ENCODE measurements at regions of chr22 and their contacts with region 1.

Region 1: DNA sequence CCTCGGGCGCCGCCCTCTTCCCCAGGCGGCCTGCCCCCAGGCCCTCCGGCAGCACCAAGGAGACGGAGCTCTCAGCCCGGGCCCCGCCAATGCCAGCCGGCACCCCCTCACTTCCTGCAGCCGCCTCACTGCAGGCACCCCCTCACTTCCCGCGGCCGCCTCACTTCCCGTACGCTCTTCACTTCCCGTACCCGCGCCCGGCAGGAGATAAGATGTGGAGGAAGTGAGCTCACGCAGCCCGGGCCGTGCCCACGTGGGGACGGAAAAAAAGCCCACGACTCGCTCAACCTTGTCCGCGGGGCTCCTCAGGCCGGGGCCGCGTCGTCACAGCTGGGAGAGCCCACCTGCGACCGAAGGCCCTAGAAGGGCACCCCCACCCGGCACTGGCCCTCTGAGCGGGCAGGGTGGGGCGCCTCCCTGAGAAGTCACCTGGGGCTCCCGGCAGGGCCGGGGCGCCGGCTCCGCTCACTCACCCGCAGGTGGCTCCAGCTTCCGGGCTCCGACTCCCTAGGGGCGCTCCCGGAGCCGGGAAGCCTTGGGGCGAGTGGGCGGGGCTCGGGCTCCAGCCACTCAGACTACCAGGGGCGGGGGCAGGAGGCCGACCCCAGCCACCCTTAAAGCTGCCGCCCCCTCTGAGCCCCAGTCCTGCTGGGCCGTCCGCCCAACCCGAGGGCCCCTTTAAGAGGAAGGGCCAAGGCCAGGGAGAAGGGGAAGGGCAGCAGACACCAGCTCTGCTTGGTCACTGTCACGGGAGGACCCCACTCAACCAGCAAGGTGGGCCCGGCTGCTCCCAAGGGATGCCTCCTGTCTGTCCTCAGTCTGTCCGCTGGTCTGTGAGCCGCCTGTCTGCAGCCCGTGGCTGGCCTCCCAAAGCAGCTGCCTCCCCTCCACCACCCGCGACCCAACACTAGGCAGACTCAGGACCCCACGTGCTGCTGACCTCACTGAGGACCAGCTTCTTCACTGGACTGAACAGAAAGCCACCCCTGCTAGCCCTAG is 31.4 kb downstream of the PISD start:
- DNase-seq: peak; percentile 94
- ATAC-seq: peak; percentile 82 to 89

Region 2: DNA sequence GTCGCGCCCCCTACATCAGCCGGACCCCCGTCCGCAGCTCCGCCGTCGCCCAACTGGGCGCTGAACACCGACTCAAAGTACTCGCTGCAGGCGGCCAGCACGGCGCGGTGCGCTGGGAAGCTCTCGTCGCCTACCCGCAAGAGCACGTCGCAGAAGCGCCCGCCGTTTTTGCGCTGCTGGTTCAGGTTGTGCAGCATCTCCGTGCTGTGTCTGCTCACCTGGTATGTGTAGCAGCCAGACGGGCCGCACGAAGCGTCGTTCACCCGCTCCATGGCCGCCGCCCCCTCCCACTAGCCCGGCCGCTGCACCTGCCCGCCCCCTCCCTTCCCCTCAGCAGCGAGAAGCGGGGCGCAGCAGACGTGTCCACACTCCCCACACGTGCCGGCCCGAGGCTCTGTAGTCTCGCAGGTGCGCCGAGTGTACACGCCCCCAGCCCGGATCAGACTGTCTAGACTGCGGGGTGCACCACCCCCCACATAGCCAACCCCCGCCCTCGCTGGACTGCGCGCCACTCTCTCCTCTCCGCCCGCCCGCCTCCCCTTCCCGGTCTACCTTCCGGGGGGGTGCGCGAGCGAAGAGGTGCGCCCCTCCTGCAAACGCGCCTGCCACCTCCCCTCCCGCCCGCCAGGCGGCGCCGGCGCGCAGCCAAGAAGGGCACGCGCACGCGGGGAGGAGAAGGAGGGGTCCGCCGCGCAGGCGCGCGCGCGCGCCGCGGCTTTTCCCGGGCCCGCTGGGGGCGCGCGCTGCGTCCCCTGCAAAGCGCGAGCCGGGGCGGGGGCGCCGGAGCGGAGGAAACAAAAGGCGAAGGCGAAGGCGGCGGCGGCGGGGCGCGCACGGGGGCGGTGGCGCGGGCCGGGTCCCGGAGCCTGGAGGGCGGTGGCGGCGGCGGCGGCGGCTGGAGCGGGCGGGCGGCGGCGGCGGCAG is 285.0 kb before region 1 on chr22:
- intact Hi-C with region 1: loop called in 1 of 2 experiments (anchors 10 kb)
- DNase-seq: peak; percentile 87
- ATAC-seq: peak; percentile 61 to 64

Region 3: GRCh38 chr22:31556627-31557203 is 73.9 kb before region 1 on chr22:
- intact Hi-C with region 1: loop called in 1 of 2 experiments (anchors 2 kb)
- DNase-seq: no peak
- ATAC-seq: no peak

Region 4: DNA sequence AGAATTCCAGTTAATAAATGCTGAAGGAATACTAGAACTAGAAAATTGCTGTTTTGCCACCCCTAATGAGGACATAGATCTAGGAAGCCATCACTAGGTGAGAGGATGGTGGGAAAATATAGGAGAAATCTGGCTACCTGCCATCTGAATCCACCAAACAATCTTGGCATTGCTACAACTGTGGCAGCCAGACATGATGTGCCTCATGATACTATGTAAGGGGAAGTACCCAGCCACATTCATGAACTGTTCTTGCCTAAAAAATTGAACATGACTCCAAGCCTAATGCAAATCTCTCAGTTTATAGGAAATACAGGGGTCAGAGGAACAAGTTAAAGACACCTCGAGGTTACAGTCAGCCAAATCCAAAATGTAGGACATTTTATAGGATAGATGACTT is 61.5 kb before region 1 on chr22:
- intact Hi-C with region 1: loop called in 1 of 2 experiments (anchors 5 kb)
- DNase-seq: no peak
- ATAC-seq: no peak